ENCODE measurements at regions of chr12 and their contacts with region 1.

Region 1: DNA sequence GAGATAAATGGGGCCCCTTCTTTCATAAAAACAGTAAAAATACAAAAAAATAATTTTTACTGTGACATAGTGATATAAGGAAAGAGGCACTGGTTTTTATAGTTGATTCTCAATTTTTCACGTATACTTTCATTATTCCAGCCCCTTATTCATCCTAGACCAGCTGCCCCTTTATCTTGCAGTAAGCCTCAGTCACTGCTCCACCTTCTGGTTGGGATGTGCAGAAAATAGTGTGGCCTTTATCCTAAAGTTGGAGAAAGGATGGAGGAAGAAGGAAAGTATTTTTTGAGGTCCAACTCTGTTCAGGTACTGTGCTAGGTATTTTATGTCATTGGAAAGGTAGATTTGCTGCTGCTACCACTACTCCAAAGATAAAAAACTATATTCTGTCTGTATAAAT is 172.7 kb downstream of the ANO6 start:
- DNase-seq: peak; percentile 58
- H3K4me3 ChIP-seq: no peak overlapping the region
- H3K27ac ChIP-seq: no peak overlapping the region
- H3K4me1 ChIP-seq: no peaks in the 10 kb centered on the region
- H3K27me3 ChIP-seq: no peaks in the 10 kb centered on the region
- CTCF ChIP-seq: peak; percentile 48 to 53
- POLR2A ChIP-seq: no peak

Region 2: GRCh38 chr12:45130881-45131281 is 257.7 kb before region 1 on chr12:
- CTCF ChIA-PET with region 1: interaction called, 7 read pairs
- POLR2A ChIA-PET with region 1: no interaction called
- dilution Hi-C with region 1: no loop called
- intact Hi-C with region 1: loop called (anchors 1 kb)
- DNase-seq: peak; percentile 71
- H3K4me3 ChIP-seq: no peak overlapping the region
- H3K27ac ChIP-seq: no peak overlapping the region
- H3K4me1 ChIP-seq: no peaks in the 10 kb centered on the region
- H3K27me3 ChIP-seq: peaks cover 5 to 22% of the 10 kb centered on the region in 2 experiments
- CTCF ChIP-seq: peak; percentile 52 to 61
- POLR2A ChIP-seq: no peak

Region 3: GRCh38 chr12:45170456-45171042 is 218.0 kb before region 1 on chr12:
- CTCF ChIA-PET with region 1: interaction called, 108 read pairs
- POLR2A ChIA-PET with region 1: no interaction called
- dilution Hi-C with region 1: no loop called
- intact Hi-C with region 1: loop called (anchors 1 kb)
- DNase-seq: peak; percentile 74
- H3K4me3 ChIP-seq: no peak overlapping the region
- H3K27ac ChIP-seq: no peak overlapping the region
- H3K4me1 ChIP-seq: no peaks in the 10 kb centered on the region
- H3K27me3 ChIP-seq: peaks cover 0 to 5% of the 10 kb centered on the region in 2 experiments
- CTCF ChIP-seq: peak; percentile 86 to 90
- POLR2A ChIP-seq: no peak

Region 4: GRCh38 chr12:45183246-45183645 is 205.3 kb before region 1 on chr12:
- CTCF ChIA-PET with region 1: interaction called, 55 read pairs
- POLR2A ChIA-PET with region 1: no interaction called
- dilution Hi-C with region 1: no loop called
- intact Hi-C with region 1: no loop called
- DNase-seq: peak; percentile 51
- H3K4me3 ChIP-seq: no peak overlapping the region
- H3K27ac ChIP-seq: no peak overlapping the region
- H3K4me1 ChIP-seq: no peaks in the 10 kb centered on the region
- H3K27me3 ChIP-seq: no peaks in the 10 kb centered on the region
- CTCF ChIP-seq: peak in 1 of 2 donors; percentile 28
- POLR2A ChIP-seq: no peak

Region 5: DNA sequence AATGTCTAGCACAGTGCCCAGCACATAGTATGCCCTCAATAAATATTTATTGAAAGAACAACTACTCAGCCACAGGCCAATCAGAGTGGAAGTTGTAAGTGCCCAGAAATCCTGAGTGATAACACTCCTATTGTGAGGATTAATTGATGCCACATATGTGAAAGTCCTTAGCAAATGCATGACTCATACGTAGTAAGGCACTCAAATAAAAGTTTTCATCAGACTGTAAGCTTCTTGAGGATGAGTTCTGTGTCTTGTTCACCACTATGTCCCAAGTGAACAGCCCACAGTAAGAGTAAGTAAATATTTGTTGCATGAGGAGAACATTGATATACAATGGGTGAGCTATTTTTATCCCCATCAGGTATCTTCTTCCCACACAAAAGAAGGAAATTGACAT is 197.3 kb before region 1 on chr12:
- CTCF ChIA-PET with region 1: interaction called, 55 read pairs
- POLR2A ChIA-PET with region 1: no interaction called
- dilution Hi-C with region 1: no loop called
- intact Hi-C with region 1: no loop called
- DNase-seq: peak; percentile 35
- H3K4me3 ChIP-seq: no peak overlapping the region
- H3K27ac ChIP-seq: no peak overlapping the region
- H3K4me1 ChIP-seq: peaks cover 20% of the 10 kb centered on the region
- H3K27me3 ChIP-seq: no peaks in the 10 kb centered on the region
- CTCF ChIP-seq: no peak
- POLR2A ChIP-seq: no peak

Measured in endothelial cell of umbilical vein (primary cell).